ENCODE measurements at regions of chr6 and their contacts with region 1.

Region 1: GRCh38 chr6:13711733-13712598 is at the start of gene RANBP9:
- DNase-seq: peak; percentile 85 to 92 (median 88)
- ATAC-seq: peak; percentile 91
- H3K4me3 ChIP-seq: peak within 1 kb of the TSS; percentile 55 to 78
- H3K27ac ChIP-seq: peak within 1 kb of the TSS; percentile 85 to 95 (median 92)
- H3K4me1 ChIP-seq: peaks cover 18% of the 10 kb centered on the region
- H3K27me3 ChIP-seq: no peaks in the 10 kb centered on the region
- CTCF ChIP-seq: peak in 1 of 7 experiments; percentile 21
- POLR2A ChIP-seq: peak; percentile 70 to 82 (median 78)
- total RNA-seq, gene RANBP9: 14.3 to 26.7 TPM

Region 2: GRCh38 chr6:13614926-13615798 is 96.8 kb before region 1 on chr6 and contains the start of gene NOL7:
- intact Hi-C with region 1: loop called (anchors 10 kb)
- DNase-seq: peak; percentile 97 to 98 (median 98)
- ATAC-seq: peak; percentile 98
- H3K4me3 ChIP-seq: peak within 1 kb of the TSS; percentile 75 to 82
- H3K27ac ChIP-seq: peak within 1 kb of the TSS; percentile 86 to 94 (median 91)
- H3K4me1 ChIP-seq: peaks cover 36% of the 10 kb centered on the region
- H3K27me3 ChIP-seq: no peaks in the 10 kb centered on the region
- CTCF ChIP-seq: peak; percentile 78 to 99 (median 99)
- POLR2A ChIP-seq: peak; percentile 76 to 89 (median 88)
- total RNA-seq, gene NOL7: 52.1 to 164 TPM